Panc1 (cell line): ENCODE measurements at regions of chr10 and their contacts with region 1.

Region 1: GRCh38 chr10:132965411-132966057 is 23.2 kb upstream of the CFAP46 start:
- DNase-seq: peak; percentile 39
- ATAC-seq: peak; percentile 64
- H3K4me3 ChIP-seq: peak overlapping the region; percentile 68 to 70
- H3K27ac ChIP-seq: peak overlapping the region; percentile 89
- H3K4me1 ChIP-seq: peaks cover 10% of the 10 kb centered on the region
- H3K27me3 ChIP-seq: peaks cover 21% of the 10 kb centered on the region
- CTCF ChIP-seq: no peak

Region 2: GRCh38 chr10:132989476-132990415 is 24.2 kb after region 1 on chr10:
- CTCF ChIA-PET with region 1: no interaction called
- POLR2A ChIA-PET with region 1: interaction called, 12 read pairs
- in situ Hi-C with region 1: no loop called
- intact Hi-C with region 1: no loop called
- DNase-seq: no peak
- ATAC-seq: no peak
- H3K4me3 ChIP-seq: no peak overlapping the region
- H3K27ac ChIP-seq: no peak overlapping the region
- H3K4me1 ChIP-seq: no peaks in the 10 kb centered on the region; the same call in 1 of the 2 replicates
- H3K27me3 ChIP-seq: no peaks in the 10 kb centered on the region
- CTCF ChIP-seq: no peak